K562 (cell line): ENCODE measurements at regions of chr2 and their contacts with region 1.

Region 1: DNA sequence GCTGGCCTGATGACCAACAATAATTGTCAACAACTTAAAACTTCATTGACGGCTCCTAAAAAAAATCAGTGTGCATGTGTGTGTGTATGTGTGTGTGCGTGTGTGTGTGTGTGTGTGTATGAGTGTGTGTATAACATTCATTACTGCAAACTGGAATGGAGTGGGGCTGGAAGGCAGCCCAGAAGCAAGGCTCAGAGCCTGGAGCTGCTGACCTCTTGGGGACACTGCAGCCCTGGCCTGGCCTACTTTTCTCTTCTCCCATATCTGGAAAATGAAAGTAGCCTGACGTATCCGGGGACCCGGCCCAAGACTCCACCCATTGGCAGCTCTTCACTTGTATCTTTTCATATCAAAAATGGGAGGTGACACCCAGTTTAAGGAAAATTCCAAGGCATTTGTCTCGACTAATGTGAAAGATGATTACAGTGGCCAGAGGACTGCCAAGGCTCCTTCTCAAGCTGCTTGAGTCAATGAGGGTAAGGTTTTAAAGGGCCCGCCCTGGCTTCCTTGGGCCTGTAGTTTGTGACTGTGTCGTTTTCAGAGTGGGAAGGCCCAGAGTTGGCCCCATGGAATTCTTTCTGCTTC is 72.4 kb upstream of the IL1R1 start:
- DNase-seq: peak in 3 of 4 experiments; percentile 33 to 81 (median 61)
- ATAC-seq: peak; percentile 81
- H3K4me3 ChIP-seq: no peak overlapping the region
- H3K27ac ChIP-seq: peak overlapping the region; percentile 43
- H3K4me1 ChIP-seq: peaks cover 33 to 49% of the 10 kb centered on the region in 2 experiments
- H3K27me3 ChIP-seq: no peaks in the 10 kb centered on the region
- CTCF ChIP-seq: peak in 2 of 3 experiments; percentile 18 to 61; a peak in 2 of 6 replicates
- EP300 ChIP-seq: no peak
- POLR2A ChIP-seq: no peak
- RAD21 ChIP-seq: peak; percentile 53 to 68

Region 2: GRCh38 chr2:101900375-101900774 is 169.8 kb before region 1 on chr2:
- CTCF ChIA-PET with region 1: no interaction called
- POLR2A ChIA-PET with region 1: no interaction called
- in situ Hi-C with region 1: no loop called
- intact Hi-C with region 1: no loop called
- DNase-seq: no peak
- ATAC-seq: no peak; the same call in 2 of the 3 replicates
- H3K4me3 ChIP-seq: no peak overlapping the region
- H3K27ac ChIP-seq: no peak overlapping the region
- H3K4me1 ChIP-seq: no peaks in the 10 kb centered on the region
- H3K27me3 ChIP-seq: 0 out of 5 replicates have a peak, but pooled peaks cover 0 to 4% of the 10 kb centered on the region in 2 experiments
- CTCF ChIP-seq: no peak
- EP300 ChIP-seq: no peak
- POLR2A ChIP-seq: no peak
- RAD21 ChIP-seq: no peak

Region 3: GRCh38 chr2:102166189-102166845 is 96.2 kb after region 1 on chr2:
- CTCF ChIA-PET with region 1: no interaction called
- POLR2A ChIA-PET with region 1: interaction called, 3 read pairs
- in situ Hi-C with region 1: no loop called
- intact Hi-C with region 1: loop called (anchors 1 kb)
- DNase-seq: peak in 2 of 4 experiments; percentile 25 to 48
- ATAC-seq: peak; percentile 91
- H3K4me3 ChIP-seq: no peak overlapping the region
- H3K27ac ChIP-seq: no peak overlapping the region
- H3K4me1 ChIP-seq: no peaks in the 10 kb centered on the region
- H3K27me3 ChIP-seq: no peaks in the 10 kb centered on the region
- CTCF ChIP-seq: peak; percentile 46 to 77 (median 55); a peak in 5 of 6 replicates
- EP300 ChIP-seq: no peak
- POLR2A ChIP-seq: no peak
- RAD21 ChIP-seq: peak; percentile 88 to 89